Posterior vena cava (tissue), 2 donors: ENCODE measurements at regions of chr7 and their contacts with region 1.

Region 1: DNA sequence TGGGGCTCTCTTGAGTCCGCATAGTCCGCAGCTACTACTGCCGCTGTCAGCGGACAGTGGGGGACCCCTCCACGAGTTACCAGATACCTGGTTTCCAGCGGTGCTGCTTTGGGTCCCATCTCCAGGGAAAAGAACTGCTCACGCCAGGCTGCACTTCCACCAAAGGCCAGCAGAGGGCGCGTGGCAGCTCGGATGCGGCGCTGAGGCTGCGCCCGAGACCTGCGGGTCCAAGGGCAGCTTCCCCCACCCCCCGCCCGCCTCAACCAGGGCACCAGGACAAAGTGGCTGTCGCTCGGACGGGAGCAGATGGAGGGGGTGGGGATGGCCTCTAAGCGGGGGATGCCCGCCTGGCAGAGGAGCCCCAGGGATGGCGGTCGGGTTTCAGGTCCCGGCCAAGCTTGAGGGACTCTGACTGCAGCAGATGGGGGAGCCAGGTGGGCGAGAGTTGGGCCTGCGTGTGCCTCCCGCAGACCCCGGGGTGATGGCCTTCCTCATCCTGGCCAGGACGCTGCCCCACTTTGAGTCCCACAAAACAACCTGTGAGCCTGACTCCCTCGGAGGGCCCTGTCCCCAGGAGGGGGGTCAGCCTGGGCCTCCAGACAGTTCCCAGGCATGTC is 23.8 kb upstream of the ZNF735 start:
- DNase-seq: peak; percentile 83

Region 2: GRCh38 chr7:64618785-64619456 is 435.7 kb after region 1 on chr7:
- intact Hi-C with region 1: loop called (anchors 2 to 5 kb)
- DNase-seq: no peak

Region 3: GRCh38 chr7:64656489-64656888 is 473.3 kb after region 1 on chr7:
- intact Hi-C with region 1: no loop called
- DNase-seq: no peak